Ovary (tissue), 10 donors: ENCODE measurements at regions of chr13 and their contacts with region 1.

Region 1: DNA sequence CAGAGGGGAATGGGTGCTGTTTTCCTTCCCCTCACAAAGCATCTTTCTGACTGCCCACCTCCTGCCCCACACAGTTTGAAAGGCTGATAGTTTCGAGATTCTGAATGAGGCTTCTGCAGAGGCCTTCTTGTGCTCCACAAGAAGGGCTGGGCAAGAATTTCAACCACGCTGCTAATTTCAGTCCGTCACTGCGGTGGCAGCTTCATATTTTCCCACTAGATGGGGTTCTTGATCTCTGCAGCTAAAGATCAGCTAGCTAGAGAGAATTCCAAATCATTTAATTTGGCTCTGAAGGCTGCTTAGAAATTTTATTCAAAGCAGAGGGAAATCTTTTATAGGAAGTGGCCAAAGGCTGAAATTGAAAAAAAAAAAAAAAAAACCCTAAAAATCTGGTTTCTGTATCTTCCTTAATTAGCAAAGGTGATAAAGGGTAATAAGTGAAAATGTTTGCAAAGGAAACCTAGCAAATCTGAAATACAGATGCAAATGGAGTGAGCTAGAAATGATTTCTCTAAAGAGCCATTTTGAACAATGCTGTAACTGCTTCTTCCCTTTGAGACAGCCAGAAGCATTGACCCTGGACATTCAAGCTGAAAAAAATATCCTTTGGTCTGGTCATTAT is 38.0 kb upstream of the C13orf42 start:
- DNase-seq: peak in 3 of 5 donors; percentile 12 to 37 (median 25)
- H3K4me3 ChIP-seq: no peak overlapping the region
- H3K27ac ChIP-seq: no peak overlapping the region
- H3K4me1 ChIP-seq: no peaks in the 10 kb centered on the region
- H3K27me3 ChIP-seq: no peaks in the 10 kb centered on the region
- CTCF ChIP-seq: peak in 1 of 3 donors; percentile 38
- EP300 ChIP-seq: no peak
- POLR2A ChIP-seq: no peak

Region 2: DNA sequence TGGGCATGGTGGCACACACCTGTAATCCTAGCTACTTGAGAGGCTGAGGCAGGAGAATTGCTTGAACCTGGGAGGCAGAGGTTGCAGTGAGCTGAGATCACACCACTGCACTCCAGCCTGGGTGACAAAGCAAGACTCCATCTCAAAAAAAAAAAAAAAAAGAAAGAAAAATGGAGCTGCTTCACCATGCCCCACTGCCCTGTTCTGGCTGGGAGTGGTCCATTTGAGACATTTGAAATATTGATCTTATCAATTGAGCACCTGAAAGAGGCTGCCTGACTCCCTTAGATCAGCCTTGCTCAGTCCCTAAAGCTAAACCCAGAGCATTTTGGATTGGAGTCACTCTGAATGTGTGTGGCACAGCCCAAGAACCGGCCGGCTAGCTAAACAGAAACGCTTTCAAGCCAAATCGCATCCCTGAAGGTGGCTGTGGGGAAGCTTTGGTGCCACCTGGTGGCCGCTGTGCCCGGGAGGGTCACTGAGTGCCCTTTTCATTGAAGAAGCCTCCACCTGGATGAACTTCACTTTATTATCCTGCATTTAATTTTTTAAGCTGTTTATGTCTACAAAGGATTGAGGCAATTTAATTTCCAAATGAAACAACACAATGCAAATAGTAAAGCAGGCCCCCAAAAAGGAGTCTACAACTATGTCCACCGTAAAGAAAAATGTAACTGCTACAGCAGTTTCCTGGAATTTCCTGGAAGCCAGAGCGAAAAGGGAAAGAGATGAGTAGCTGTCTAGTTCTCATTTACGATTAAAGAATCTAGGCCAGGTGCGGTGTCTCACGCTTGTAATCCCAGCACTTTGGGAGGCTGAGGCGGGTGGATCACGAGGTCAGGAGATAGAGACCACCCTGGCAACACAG is 137.3 kb after region 1 on chr13:
- intact Hi-C with region 1: loop called in 1 of 4 experiments (anchors 10 kb)
- DNase-seq: peak; percentile 62 to 84 (median 68)
- H3K4me3 ChIP-seq: no peak overlapping the region
- H3K27ac ChIP-seq: no peak overlapping the region
- H3K4me1 ChIP-seq: peaks cover 3% of the 10 kb centered on the region
- H3K27me3 ChIP-seq: no peaks in the 10 kb centered on the region
- CTCF ChIP-seq: peak; percentile 42 to 66 (median 43)
- EP300 ChIP-seq: no peak
- POLR2A ChIP-seq: no peak